ENCODE measurements at regions of chr11 and their contacts with region 1.

Region 1: GRCh38 chr11:36131721-36132397 is 157.4 kb downstream of the COMMD9 start:
- DNase-seq: peak in 4 of 5 donors; percentile 48 to 57 (median 56)
- ATAC-seq: peak; percentile 75 to 86 (median 84)
- H3K4me3 ChIP-seq: no peak overlapping the region
- H3K27ac ChIP-seq: no peak overlapping the region
- H3K4me1 ChIP-seq: peaks cover 0 to 12% (median 0%) of the 10 kb centered on the region in 12 donors
- H3K27me3 ChIP-seq: peaks cover 0 to 8% (median 0%) of the 10 kb centered on the region in 9 donors
- CTCF ChIP-seq: peak; percentile 51 to 92 (median 74)
- POLR2A ChIP-seq: no peak

Region 2: GRCh38 chr11:35485656-35486322 is 646.1 kb before region 1 on chr11:
- intact Hi-C with region 1: loop called in 2 of 10 experiments (anchors 5 to 10 kb)
- DNase-seq: peak; percentile 59 to 80 (median 67)
- ATAC-seq: peak; percentile 55 to 95 (median 85)
- H3K4me3 ChIP-seq: no peak overlapping the region
- H3K27ac ChIP-seq: no peak overlapping the region
- H3K4me1 ChIP-seq: peaks cover 0 to 14% (median 1%) of the 10 kb centered on the region in 12 donors
- H3K27me3 ChIP-seq: peaks cover 0 to 27% (median 0%) of the 10 kb centered on the region in 9 donors
- CTCF ChIP-seq: peak; percentile 82 to 97 (median 90)
- POLR2A ChIP-seq: no peak

Region 3: DNA sequence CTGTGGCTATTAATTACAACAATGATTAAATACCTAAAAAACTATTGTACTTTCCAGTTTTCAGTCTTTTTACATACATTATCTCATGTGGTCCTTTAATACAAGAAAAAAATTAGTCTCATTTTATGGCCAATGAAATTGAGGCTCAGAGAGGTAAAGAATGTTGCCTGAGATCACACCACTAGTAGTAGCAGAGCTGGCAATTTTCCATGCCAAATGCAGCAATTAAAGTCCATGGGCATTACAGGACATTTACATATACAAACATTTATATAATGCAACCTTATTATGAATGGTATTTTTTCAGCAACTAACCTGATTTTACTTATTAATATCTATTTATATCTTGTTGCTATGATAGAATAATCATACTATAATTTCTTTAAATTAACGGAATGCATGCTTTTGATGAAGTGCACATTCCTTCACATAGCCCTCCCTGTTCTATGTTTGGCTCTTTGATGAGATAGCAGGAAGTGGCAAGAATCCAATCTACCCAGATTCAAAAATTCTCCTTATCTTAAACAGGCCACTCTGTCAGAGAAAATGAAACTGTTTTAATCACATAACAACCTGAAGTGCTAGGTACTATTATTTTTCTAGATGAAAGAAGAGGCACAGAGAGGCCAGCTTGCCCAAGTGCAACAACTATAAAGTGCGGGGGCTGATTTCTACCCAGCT is 308.9 kb before region 1 on chr11:
- intact Hi-C with region 1: loop called (anchors 5 to 10 kb)
- DNase-seq: no peak
- ATAC-seq: no peak
- H3K4me3 ChIP-seq: no peak overlapping the region
- H3K27ac ChIP-seq: no peak overlapping the region
- H3K4me1 ChIP-seq: peaks cover 0 to 31% (median 14%) of the 10 kb centered on the region in 12 donors
- H3K27me3 ChIP-seq: no peaks in the 10 kb centered on the region
- CTCF ChIP-seq: no peak
- POLR2A ChIP-seq: no peak

Region 4: GRCh38 chr11:36034551-36035331 is 97.1 kb before region 1 on chr11:
- intact Hi-C with region 1: loop called in 1 of 10 experiments (anchors 5 kb)
- DNase-seq: no peak
- ATAC-seq: no peak
- H3K4me3 ChIP-seq: no peak overlapping the region
- H3K27ac ChIP-seq: no peak overlapping the region
- H3K4me1 ChIP-seq: peaks cover 0 to 25% (median 7%) of the 10 kb centered on the region in 12 donors
- H3K27me3 ChIP-seq: no peaks in the 10 kb centered on the region
- CTCF ChIP-seq: no peak
- POLR2A ChIP-seq: no peak

Region 5: DNA sequence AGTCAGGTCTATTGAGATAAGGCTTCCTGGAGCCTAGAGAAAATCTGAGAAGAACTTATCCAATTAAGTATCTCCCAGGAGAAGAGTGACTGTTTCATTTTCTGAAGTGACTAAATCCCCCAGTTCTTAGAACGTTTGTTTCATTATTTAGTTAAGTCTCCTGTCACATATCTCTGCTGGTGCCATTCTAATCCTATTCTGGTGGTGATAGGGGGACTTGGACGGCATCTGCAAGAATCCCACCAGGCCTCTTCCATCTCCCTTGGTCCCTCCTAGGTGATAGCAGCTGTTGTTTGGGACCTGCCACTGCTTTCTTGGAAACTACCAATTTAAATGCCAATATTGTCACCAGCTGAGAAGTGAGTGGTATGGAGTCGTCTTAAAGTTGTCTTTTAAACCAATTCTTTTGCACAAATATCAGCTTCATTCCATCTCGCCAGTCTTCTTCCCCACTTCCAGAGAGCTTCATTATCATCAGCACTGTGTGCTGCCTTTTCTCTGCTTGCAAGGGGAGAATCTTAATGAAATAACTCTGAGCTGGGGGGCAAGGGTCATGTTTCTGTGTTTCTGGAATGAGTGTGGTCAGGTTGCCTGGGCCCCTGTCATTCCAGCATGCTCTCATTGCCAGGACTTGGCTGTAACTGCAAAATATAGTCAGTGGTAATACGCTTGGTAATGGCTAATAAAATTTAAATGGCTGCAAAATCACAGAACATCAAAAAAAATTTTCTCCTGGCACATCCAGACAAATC is 83.2 kb before region 1 on chr11:
- intact Hi-C with region 1: loop called in 4 of 10 experiments (anchors 5 kb)
- DNase-seq: no peak
- ATAC-seq: no peak
- H3K4me3 ChIP-seq: no peak overlapping the region
- H3K27ac ChIP-seq: no peak overlapping the region
- H3K4me1 ChIP-seq: no peaks in the 10 kb centered on the region
- H3K27me3 ChIP-seq: no peaks in the 10 kb centered on the region
- CTCF ChIP-seq: no peak
- POLR2A ChIP-seq: no peak

Region 6: GRCh38 chr11:36265793-36266628 is 134.2 kb after region 1 on chr11:
- intact Hi-C with region 1: loop called in 1 of 10 experiments (anchors 10 kb)
- DNase-seq: peak; percentile 16 to 72 (median 44)
- ATAC-seq: peak; percentile 34 to 76 (median 72)
- H3K4me3 ChIP-seq: no peak overlapping the region
- H3K27ac ChIP-seq: no peak overlapping the region
- H3K4me1 ChIP-seq: peaks cover 0 to 3% (median 0%) of the 10 kb centered on the region in 12 donors
- H3K27me3 ChIP-seq: peaks cover 0 to 7% (median 0%) of the 10 kb centered on the region in 9 donors
- CTCF ChIP-seq: peak; percentile 63 to 84 (median 74)
- POLR2A ChIP-seq: no peak